Activated T-helper 1 cell treated with anti-CD3 and anti-CD28 coated beads, Interleukin-12 subunit alpha, Interleukin-12 subunit beta, Interleukin-2, Interleukin-4 antibody, amounts not matched to agents 30 ng/mL and 10 ng/mL and 1 ng/mL, durations not matched to agents 14 hours and 24 hours and 36 hours (primary cell): ENCODE measurements at regions of chr11 and their contacts with region 1.

Region 1: DNA sequence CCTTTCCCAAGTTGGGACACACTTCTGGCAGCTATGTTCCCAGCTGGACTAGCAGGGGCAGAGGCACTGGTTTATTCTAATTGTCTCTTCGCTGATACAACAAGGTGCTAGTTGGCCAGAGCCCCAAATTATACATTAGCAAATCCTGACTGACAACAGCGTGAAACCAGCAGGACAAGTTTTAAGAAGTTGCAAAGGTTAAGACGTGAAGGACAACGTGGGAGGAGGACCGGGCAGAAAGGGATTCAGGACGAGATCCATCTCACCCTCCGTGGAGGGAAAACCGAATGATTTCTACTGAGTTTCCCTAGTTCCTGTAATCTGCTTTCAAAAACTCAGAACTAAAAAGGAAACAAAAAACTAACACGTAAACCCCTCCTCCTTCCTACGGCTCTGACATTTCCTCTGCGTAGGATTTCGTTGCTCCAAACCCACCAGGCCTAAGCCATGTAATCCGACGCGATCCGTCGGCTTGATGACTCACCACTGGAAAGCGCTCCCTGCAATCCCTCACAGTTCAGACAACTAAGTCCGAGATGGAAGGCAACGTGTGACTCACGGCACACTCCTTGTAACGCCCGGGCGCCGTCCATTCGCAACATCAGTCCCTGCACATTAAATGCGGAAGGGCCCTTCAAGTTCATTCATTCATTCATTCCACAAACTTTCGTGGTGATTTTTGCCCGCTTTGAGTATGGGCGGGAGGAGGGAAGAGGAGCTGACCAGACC is 703 bp downstream of the POGLUT3 start:
- DNase-seq: peak; percentile 61
- H3K4me3 Mint-ChIP-seq: peak overlapping the region; percentile 90
- H3K27ac Mint-ChIP-seq: peak overlapping the region; percentile 96
- H3K4me1 Mint-ChIP-seq: peaks cover 35% of the 10 kb centered on the region
- H3K27me3 Mint-ChIP-seq: no peaks in the 10 kb centered on the region

Region 2: GRCh38 chr11:107457558-107458271 is 1039.8 kb before region 1 on chr11 and contains the start of gene CWF19L2:
- intact Hi-C with region 1: loop called (anchors 5 kb)
- DNase-seq: peak; percentile 88
- H3K4me3 Mint-ChIP-seq: peak within 1 kb of the TSS; percentile 91
- H3K27ac Mint-ChIP-seq: peak within 1 kb of the TSS; percentile 87
- H3K4me1 Mint-ChIP-seq: peaks cover 28% of the 10 kb centered on the region
- H3K27me3 Mint-ChIP-seq: peaks cover 9% of the 10 kb centered on the region
- total RNA-seq, gene CWF19L2: 16.5 and 16.7 TPM in 2 replicates

Region 3: DNA sequence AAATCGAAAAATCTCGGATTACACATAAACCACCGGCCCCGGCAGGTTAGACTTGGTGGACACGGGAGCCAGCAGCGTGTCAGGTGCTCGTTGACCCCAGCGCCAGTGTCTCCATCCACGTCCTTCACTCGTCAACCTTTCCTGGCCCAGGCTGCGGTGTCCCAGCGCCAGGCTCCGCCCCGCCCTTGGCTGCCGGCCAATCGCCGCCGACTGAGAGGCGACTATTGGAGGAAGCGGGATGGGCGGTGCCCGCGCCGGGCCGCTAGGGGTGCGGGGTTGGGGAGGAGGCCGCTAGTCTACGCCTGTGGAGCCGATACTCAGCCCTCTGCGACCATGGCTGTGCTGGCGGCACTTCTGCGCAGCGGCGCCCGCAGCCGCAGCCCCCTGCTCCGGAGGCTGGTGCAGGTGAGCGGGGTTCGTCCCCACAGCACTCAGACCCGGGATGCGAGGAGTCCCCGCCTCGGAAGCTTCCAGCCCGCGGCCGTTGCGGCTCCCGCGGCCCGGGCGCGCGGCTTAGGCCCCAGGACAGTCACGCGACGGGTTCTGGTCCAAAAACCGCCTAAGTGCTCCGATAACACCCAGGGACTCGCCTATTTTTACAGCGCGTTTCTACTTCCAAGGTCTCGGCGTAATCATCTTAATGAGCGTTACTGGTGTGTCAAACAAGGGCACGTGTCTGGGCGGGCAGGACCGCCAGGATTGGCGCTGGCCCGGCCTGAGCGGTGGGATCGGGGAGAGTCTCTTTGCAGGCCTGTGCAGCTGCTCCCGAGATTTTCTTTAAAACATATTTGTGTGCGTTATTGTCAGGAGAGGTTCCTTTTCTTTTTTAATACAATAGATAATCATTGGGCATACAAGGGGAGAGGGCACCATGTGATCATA is 376.0 kb before region 1 on chr11 and contains the start of gene ACAT1:
- intact Hi-C with region 1: loop called (anchors 1 kb)
- DNase-seq: peak; percentile 95
- H3K4me3 Mint-ChIP-seq: peak within 1 kb of the TSS; percentile 97
- H3K27ac Mint-ChIP-seq: peak within 1 kb of the TSS; percentile 82
- H3K4me1 Mint-ChIP-seq: peaks cover 36% of the 10 kb centered on the region
- H3K27me3 Mint-ChIP-seq: no peaks in the 10 kb centered on the region
- total RNA-seq, gene ACAT1: 52.8 and 56.8 TPM in 2 replicates

Region 4: DNA sequence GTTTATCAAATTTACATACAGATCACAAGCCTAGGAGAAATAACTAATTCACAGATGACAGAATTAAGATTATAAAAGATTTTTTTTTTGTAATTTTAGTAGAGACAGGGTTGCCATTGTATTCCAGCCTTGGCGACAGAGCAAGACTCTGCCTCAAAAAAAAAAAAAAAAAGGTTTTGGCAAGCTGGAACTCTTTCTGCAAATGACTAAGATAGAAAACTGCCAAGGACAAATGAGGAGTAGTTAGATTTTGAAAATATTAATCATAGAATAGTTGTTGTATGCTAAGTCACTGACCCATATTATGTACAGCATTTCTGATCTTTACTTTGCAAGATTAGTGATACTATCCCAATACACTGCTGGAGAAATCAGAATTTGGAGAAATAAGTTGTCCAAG is 129.3 kb before region 1 on chr11:
- intact Hi-C with region 1: no loop called
- DNase-seq: no peak
- H3K4me3 Mint-ChIP-seq: no peak overlapping the region
- H3K27ac Mint-ChIP-seq: no peak overlapping the region
- H3K4me1 Mint-ChIP-seq: no peaks in the 10 kb centered on the region
- H3K27me3 Mint-ChIP-seq: no peaks in the 10 kb centered on the region

Region 5: DNA sequence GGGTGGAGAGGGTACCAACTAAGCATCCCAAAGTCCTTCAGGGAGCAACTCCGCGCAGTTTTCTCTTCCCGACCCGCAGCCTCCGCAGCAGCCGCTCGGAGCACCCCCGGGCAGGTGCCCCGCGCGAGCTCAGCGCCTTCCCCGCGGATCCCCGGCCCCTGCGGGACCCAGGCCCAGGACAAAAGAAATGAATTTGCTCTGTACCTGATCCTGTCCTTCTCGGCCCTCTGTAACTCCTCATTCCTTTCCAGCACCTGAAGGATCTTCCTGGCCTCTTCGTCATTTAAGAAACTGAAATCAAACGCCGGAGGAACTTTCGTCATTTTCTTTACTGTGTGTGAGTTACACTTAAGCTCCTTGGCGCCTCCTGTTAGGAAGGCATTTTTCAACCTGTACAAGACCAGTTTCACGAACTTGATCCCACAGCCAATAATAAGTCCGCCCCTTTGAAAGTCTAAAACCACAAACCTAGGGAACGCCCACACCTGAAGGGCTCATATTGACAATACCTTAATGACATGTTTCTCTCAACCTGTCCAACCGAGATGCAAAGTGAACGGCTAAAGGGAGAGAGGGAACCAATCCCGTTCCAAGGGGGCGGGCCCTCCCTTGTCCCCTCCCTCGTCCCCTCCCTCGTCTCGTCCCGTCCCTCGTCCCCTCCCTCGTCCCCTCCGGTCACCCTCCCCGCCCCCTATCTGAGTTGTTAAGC is 95.9 kb after region 1 on chr11 and contains the start of gene EXPH5:
- intact Hi-C with region 1: loop called (anchors 1 kb)
- DNase-seq: peak; percentile 76
- H3K4me3 Mint-ChIP-seq: peak within 1 kb of the TSS; percentile 89
- H3K27ac Mint-ChIP-seq: peak within 1 kb of the TSS; percentile 75
- H3K4me1 Mint-ChIP-seq: peaks cover 23% of the 10 kb centered on the region
- H3K27me3 Mint-ChIP-seq: peaks cover 29% of the 10 kb centered on the region
- total RNA-seq, gene EXPH5: 0.56 and 0.65 TPM in 2 replicates

Region 6: GRCh38 chr11:108620958-108621772 is 123.7 kb after region 1 on chr11:
- intact Hi-C with region 1: loop called (anchors 2 kb)
- DNase-seq: no peak
- H3K4me3 Mint-ChIP-seq: no peak overlapping the region
- H3K27ac Mint-ChIP-seq: no peak overlapping the region
- H3K4me1 Mint-ChIP-seq: peaks cover 18% of the 10 kb centered on the region
- H3K27me3 Mint-ChIP-seq: peaks cover 7% of the 10 kb centered on the region

Region 7: GRCh38 chr11:108664730-108665525 is 167.4 kb after region 1 on chr11 and contains the start of gene DDX10:
- intact Hi-C with region 1: loop called (anchors 1 kb)
- DNase-seq: peak; percentile 98
- H3K4me3 Mint-ChIP-seq: peak within 1 kb of the TSS; percentile 100
- H3K27ac Mint-ChIP-seq: peak within 1 kb of the TSS; percentile 97
- H3K4me1 Mint-ChIP-seq: peaks cover 45% of the 10 kb centered on the region
- H3K27me3 Mint-ChIP-seq: peaks cover 7% of the 10 kb centered on the region
- total RNA-seq, gene DDX10: 68.4 and 68.8 TPM in 2 replicates

Region 8: DNA sequence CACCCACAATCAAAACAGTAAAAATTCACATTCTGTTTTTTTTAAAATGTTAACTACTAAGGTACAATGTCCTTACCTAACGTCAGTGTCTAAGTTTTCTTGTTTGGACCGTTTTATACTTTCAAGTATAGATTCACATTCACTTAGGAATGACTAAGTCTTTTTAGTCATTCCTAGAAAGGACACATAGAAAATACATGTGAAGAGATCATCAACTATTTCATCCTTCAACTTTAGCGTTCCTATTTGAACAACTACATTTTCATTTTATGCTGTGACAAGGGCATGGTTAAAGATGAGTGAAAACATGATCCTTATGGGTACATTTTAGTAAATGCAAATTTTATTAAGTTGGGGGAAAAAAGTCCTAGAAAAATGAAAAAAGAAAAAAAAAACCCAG is 230.2 kb after region 1 on chr11:
- intact Hi-C with region 1: loop called (anchors 5 kb)
- DNase-seq: no peak
- H3K4me3 Mint-ChIP-seq: peak overlapping the region; percentile 5
- H3K27ac Mint-ChIP-seq: peak overlapping the region; percentile 19
- H3K4me1 Mint-ChIP-seq: peaks cover 47% of the 10 kb centered on the region
- H3K27me3 Mint-ChIP-seq: no peaks in the 10 kb centered on the region

Region 9: DNA sequence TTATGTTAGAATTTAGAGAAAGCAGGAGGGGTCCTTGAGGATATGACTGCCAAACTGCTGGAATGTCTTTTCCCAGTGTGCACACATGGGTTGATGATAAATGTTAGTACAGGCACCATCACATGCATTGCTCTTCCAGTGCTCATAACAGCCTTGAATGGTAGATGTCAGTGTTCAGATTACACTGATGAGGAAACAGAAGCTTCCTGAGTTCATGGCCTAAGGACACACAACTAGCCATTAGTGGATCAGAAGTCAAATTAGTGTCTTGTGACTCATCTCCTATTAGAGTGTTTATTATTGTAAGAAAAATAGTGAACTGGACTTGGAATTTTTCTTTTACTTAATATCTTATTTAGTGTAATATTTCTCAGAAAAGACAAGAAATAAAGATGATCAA is 408.8 kb after region 1 on chr11:
- intact Hi-C with region 1: no loop called
- DNase-seq: no peak
- H3K4me3 Mint-ChIP-seq: no peak overlapping the region
- H3K27ac Mint-ChIP-seq: no peak overlapping the region
- H3K4me1 Mint-ChIP-seq: no peaks in the 10 kb centered on the region
- H3K27me3 Mint-ChIP-seq: no peaks in the 10 kb centered on the region